CD4-positive, alpha-beta T cell (primary cell): ENCODE measurements at regions of chr17 and their contacts with region 1.

Region 1: GRCh38 chr17:7045909-7046724 is 2.2 kb upstream of the SLC16A11 start:
- DNase-seq: peak in 9 of 14 experiments; percentile 31 to 89 (median 49)
- ATAC-seq: peak; percentile 53
- H3K4me3 ChIP-seq: peak overlapping the region; percentile 55
- H3K4me3 Mint-ChIP-seq: peak overlapping the region; percentile 90
- H3K27ac ChIP-seq: peak overlapping the region; percentile 64 to 68
- H3K27ac Mint-ChIP-seq: peak overlapping the region; percentile 94
- H3K4me1 ChIP-seq: peaks cover 49% of the 10 kb centered on the region
- H3K4me1 Mint-ChIP-seq: peaks cover 44% of the 10 kb centered on the region
- H3K27me3 ChIP-seq: peaks cover 0 to 5% of the 10 kb centered on the region in 2 experiments
- H3K27me3 Mint-ChIP-seq: no peaks in the 10 kb centered on the region
- CTCF ChIP-seq: peak; percentile 80

Region 2: DNA sequence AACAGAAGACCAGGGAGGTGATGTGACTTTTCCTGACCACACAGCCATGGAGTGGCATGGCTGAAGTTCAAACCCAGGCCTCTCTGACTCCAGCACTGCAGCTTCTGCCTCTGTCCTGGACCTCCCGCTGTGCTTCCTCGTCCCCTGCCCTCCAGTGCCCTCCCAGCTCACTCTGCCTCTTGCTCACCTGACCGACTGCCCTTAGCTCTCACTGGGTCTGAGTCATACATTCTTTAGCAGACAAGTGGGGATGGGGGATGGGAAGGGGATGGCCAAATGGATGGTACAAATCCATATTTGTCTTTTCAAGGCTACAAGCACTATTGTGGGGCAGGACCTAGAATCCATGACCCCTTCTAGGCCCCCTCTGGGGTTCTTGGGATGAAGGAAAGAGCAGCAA is 522.8 kb before region 1 on chr17:
- CTCF ChIA-PET with region 1: no interaction called
- POLR2A ChIA-PET with region 1: no interaction called
- intact Hi-C with region 1: no loop called
- DNase-seq: no peak
- ATAC-seq: no peak
- H3K4me3 ChIP-seq: no peak overlapping the region
- H3K4me3 Mint-ChIP-seq: no peak overlapping the region
- H3K27ac ChIP-seq: no peak overlapping the region
- H3K27ac Mint-ChIP-seq: no peak overlapping the region
- H3K4me1 ChIP-seq: no peaks in the 10 kb centered on the region
- H3K4me1 Mint-ChIP-seq: no peaks in the 10 kb centered on the region
- H3K27me3 ChIP-seq: no peaks in the 10 kb centered on the region
- H3K27me3 Mint-ChIP-seq: no peaks in the 10 kb centered on the region
- CTCF ChIP-seq: no peak

Region 3: DNA sequence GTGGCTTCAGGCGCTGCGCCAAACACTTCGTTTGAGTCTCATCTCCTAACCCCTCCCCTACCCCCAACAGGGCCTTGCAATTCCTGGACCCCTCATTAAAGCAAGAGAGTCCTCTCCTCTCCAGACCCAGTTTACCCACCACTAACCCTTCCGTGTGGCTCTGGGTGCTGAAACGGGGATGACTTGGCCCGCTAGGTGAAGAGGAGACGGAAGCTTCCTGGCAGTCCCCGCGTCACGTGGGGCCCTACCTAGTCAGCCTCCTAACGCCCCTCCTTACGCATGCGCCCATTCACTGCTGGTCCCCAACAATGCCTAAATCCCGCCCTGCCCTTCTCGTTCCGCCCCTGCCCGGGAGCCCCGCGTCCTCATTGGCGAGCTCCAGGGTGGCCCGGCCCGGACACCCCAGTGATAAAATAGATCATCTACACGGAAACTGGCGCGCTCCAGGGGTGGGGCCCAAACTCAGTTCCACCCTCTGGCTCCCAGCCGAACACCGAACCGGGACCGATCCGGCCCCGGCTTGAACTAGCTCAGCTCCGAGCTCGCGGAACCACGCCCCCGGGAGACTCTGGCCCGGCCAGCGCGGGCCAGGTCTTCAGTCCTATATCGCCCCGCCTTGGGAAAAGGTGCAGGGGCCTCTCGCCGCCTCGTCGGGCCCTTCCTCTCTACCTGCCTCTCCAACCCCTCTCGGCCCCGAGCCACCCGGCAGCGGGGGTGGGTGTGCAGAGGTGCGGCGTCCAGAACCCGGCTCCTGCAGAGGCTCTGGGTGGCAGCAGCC is 10.3 kb before region 1 on chr17 and contains the start of gene SLC16A13:
- CTCF ChIA-PET with region 1: interaction called, 17 read pairs
- POLR2A ChIA-PET with region 1: interaction called, 65 read pairs
- intact Hi-C with region 1: no loop called
- DNase-seq: peak; percentile 94 to 100 (median 98)
- ATAC-seq: peak; percentile 90
- H3K4me3 ChIP-seq: peak within 1 kb of the TSS; percentile 99
- H3K4me3 Mint-ChIP-seq: peak within 1 kb of the TSS; percentile 91
- H3K27ac ChIP-seq: peak within 1 kb of the TSS; percentile 84 to 93
- H3K27ac Mint-ChIP-seq: peak within 1 kb of the TSS; percentile 99
- H3K4me1 ChIP-seq: peaks cover 57% of the 10 kb centered on the region
- H3K4me1 Mint-ChIP-seq: peaks cover 63% of the 10 kb centered on the region
- H3K27me3 ChIP-seq: no peaks in the 10 kb centered on the region
- H3K27me3 Mint-ChIP-seq: no peaks in the 10 kb centered on the region
- CTCF ChIP-seq: no peak
- total RNA-seq, gene SLC16A13: 2.3 to 2.4 TPM

Region 4: GRCh38 chr17:7177196-7177953 is 131.3 kb after region 1 on chr17:
- CTCF ChIA-PET with region 1: interaction called, 12 read pairs
- POLR2A ChIA-PET with region 1: interaction called, 5 read pairs
- intact Hi-C with region 1: loop called in 1 of 2 experiments (anchors 2 kb)
- DNase-seq: peak; percentile 47 to 84 (median 56)
- ATAC-seq: peak; percentile 89
- H3K4me3 ChIP-seq: peak overlapping the region; percentile 43
- H3K4me3 Mint-ChIP-seq: peak overlapping the region; percentile 74
- H3K27ac ChIP-seq: no peak overlapping the region
- H3K27ac Mint-ChIP-seq: no peak overlapping the region
- H3K4me1 ChIP-seq: peaks cover 30% of the 10 kb centered on the region
- H3K4me1 Mint-ChIP-seq: peaks cover 14% of the 10 kb centered on the region
- H3K27me3 ChIP-seq: peaks cover 8 to 29% of the 10 kb centered on the region in 2 experiments
- H3K27me3 Mint-ChIP-seq: no peaks in the 10 kb centered on the region
- CTCF ChIP-seq: peak; percentile 96

Region 5: DNA sequence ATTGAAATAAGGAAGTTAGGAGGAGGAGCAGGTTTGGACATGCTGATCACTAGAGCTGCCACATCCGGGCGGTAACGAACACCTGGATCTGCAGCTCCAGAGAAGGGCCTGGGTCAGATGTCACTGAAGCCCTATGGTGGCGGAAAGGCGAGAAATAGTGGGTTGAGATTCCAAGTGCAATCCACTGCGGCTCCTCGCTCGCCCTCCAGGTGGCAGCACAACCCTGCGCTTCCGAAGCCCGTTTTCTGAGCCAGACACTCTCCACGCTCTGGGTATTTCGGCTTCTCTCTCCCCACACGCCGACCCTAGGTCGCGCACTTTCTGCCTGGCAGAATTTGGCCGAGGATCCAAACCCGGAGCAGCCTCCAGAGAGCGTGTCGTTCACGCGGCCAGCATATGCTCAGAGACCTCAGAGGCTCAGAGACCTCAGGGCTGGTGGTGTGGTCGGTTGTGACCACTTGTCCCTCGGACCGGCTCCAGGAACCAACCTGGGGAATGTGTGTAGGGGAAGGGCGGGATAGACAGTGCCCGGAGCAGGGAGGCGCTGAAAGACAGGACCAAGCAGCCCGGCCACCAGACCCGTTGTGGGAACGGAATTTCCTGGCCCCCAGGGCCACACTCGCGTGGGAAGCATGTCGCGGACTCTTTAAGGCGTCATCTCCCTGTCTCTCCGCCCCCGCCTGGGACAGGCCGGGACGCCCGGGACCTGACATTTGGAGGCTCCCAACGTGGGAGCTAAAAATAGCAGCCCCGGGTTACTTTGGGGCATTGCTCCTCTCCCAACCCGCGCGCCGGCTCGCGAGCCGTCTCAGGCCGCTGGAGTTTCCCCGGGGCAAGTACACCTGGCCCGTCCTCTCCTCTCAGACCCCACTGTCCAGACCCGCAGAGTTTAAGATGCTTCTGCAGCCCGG is 234.7 kb after region 1 on chr17:
- CTCF ChIA-PET with region 1: no interaction called
- POLR2A ChIA-PET with region 1: no interaction called
- intact Hi-C with region 1: loop called in 1 of 2 experiments (anchors 5 kb)
- DNase-seq: peak; percentile 77 to 93 (median 84)
- ATAC-seq: peak; percentile 90
- H3K4me3 ChIP-seq: peak overlapping the region; percentile 53
- H3K4me3 Mint-ChIP-seq: peak overlapping the region; percentile 85
- H3K27ac ChIP-seq: no peak overlapping the region
- H3K27ac Mint-ChIP-seq: peak overlapping the region; percentile 42
- H3K4me1 ChIP-seq: peaks cover 28% of the 10 kb centered on the region
- H3K4me1 Mint-ChIP-seq: peaks cover 26% of the 10 kb centered on the region
- H3K27me3 ChIP-seq: peaks cover 33 to 47% of the 10 kb centered on the region in 2 experiments
- H3K27me3 Mint-ChIP-seq: peaks cover 28% of the 10 kb centered on the region
- CTCF ChIP-seq: peak; percentile 86

Region 6: DNA sequence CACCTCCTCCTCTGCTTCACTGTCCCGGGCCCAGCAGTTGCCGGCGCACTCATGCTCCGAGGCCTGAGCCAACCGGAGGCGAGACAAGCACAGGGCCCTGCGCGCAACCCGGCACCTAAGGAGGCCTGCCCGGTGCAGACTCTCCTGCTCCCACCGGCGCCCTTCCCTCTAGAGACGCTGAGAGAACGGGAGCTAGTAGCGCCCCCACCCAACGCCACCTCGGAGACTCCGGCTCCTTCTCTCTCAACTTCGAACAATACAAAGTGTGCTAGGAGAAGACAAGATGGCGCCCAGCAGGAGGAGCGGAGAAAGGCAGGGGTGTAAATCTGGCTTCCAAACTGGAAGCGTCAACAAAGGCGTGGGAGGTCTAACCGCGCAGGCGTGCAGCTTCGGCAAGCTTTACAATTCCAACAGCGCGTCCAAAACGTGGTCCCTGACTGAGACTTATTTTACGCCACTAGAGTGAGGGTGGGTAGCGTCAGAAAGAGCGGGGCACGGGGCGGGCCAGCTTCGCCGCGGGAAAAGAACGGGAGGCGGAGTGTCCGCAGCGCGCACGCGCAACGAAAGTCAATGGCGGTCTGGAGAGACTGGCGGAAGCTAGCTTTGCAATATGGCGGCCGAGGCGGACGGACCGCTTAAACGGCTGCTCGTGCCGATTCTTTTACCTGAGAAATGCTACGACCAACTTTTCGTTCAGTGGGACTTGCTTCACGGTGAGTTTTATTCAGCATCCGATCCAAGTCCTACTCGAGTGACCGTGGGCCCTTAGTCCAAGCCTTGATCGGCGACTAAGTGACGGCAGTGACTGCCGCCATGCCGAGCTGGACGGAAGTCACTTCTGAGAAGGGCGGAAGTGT is 537.4 kb after region 1 on chr17 and contains the start of gene MPDU1:
- CTCF ChIA-PET with region 1: interaction called, 5 read pairs
- POLR2A ChIA-PET with region 1: interaction called, 3 read pairs
- intact Hi-C with region 1: loop called in 1 of 2 experiments (anchors 10 kb)
- DNase-seq: peak; percentile 89 to 98 (median 94)
- ATAC-seq: peak; percentile 85
- H3K4me3 ChIP-seq: peak within 1 kb of the TSS; percentile 86
- H3K4me3 Mint-ChIP-seq: peak within 1 kb of the TSS; percentile 98
- H3K27ac ChIP-seq: peak within 1 kb of the TSS; percentile 78 to 98
- H3K27ac Mint-ChIP-seq: peak within 1 kb of the TSS; percentile 98
- H3K4me1 ChIP-seq: peaks cover 56% of the 10 kb centered on the region
- H3K4me1 Mint-ChIP-seq: peaks cover 52% of the 10 kb centered on the region
- H3K27me3 ChIP-seq: no peaks in the 10 kb centered on the region
- H3K27me3 Mint-ChIP-seq: no peaks in the 10 kb centered on the region
- CTCF ChIP-seq: no peak
- total RNA-seq, gene MPDU1: 12.0 to 12.9 TPM